Endothelial cell of umbilical vein (primary cell): ENCODE measurements at regions of chr13 and their contacts with region 1.

Region 1: GRCh38 chr13:96025283-96025682 is 27.9 kb downstream of the UGGT2 start:
- DNase-seq: peak; percentile 79
- H3K4me3 ChIP-seq: no peak overlapping the region
- H3K27ac ChIP-seq: peak overlapping the region; percentile 38
- H3K4me1 ChIP-seq: peaks cover 20% of the 10 kb centered on the region
- H3K27me3 ChIP-seq: no peaks in the 10 kb centered on the region
- CTCF ChIP-seq: no peak
- POLR2A ChIP-seq: no peak

Region 2: GRCh38 chr13:95948656-95949055 is 76.6 kb before region 1 on chr13:
- CTCF ChIA-PET with region 1: no interaction called
- POLR2A ChIA-PET with region 1: no interaction called
- dilution Hi-C with region 1: no loop called
- intact Hi-C with region 1: no loop called
- DNase-seq: no peak
- H3K4me3 ChIP-seq: no peak overlapping the region
- H3K27ac ChIP-seq: no peak overlapping the region
- H3K4me1 ChIP-seq: no peaks in the 10 kb centered on the region
- H3K27me3 ChIP-seq: no peaks in the 10 kb centered on the region
- CTCF ChIP-seq: no peak
- POLR2A ChIP-seq: no peak

Region 3: DNA sequence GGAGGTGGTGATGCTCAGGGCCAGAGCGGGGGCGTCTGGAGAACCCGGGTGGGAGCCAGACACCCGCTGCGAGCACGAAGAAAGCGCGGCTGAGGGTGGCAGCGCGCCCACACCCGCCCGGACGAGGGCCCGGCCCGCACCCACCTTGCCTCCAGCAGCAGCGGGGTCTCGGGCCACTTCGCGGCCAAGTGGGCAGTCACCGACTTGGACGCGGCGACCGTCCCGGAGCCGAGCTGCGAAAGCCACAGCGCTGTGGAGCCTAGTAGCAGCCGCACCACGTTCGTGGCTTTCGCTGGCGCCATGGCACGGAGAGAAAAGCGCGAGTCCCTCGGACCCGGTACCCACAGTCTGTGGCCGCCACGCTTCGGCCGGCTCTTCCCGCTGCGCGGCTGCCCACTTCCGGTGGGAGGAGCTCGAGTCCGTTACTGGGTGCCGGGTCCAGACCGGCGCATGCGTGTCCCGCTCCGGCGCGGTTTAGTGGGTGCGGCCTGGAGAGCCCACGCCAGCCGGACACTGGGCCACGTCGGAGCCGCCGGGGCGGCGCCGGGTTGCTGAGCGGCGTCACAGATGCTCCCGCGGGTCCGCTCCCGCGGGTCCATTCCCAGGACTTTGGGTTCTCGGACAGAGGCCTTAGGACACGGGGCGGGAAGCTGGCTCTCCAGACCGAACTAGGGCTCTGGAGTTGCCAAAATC is 27.9 kb after region 1 on chr13 and contains the start of gene UGGT2:
- CTCF ChIA-PET with region 1: interaction called, 23 read pairs
- POLR2A ChIA-PET with region 1: no interaction called
- dilution Hi-C with region 1: no loop called
- intact Hi-C with region 1: loop called (anchors 1 kb)
- DNase-seq: peak; percentile 94
- H3K4me3 ChIP-seq: peak within 1 kb of the TSS; percentile 92 to 96 (median 94)
- H3K27ac ChIP-seq: peak within 1 kb of the TSS; percentile 95
- H3K4me1 ChIP-seq: peaks cover 3% of the 10 kb centered on the region
- H3K27me3 ChIP-seq: peaks cover 0 to 6% of the 10 kb centered on the region in 2 experiments
- CTCF ChIP-seq: no peak
- POLR2A ChIP-seq: peak; percentile 80
- total RNA-seq, gene UGGT2: 25.1 and 25.7 TPM in 2 replicates

Region 4: GRCh38 chr13:96089749-96090239 is 64.5 kb after region 1 on chr13 and contains the start of gene HS6ST3:
- CTCF ChIA-PET with region 1: interaction called, 10 read pairs
- POLR2A ChIA-PET with region 1: no interaction called
- dilution Hi-C with region 1: no loop called
- intact Hi-C with region 1: loop called (anchors 5 kb)
- DNase-seq: peak; percentile 15
- H3K4me3 ChIP-seq: peak within 1 kb of the TSS; percentile 21 to 42 (median 38)
- H3K27ac ChIP-seq: no peak within 1 kb of the TSS
- H3K4me1 ChIP-seq: peaks cover 27% of the 10 kb centered on the region
- H3K27me3 ChIP-seq: peaks cover 38 to 39% of the 10 kb centered on the region in 2 experiments
- CTCF ChIP-seq: no peak
- POLR2A ChIP-seq: no peak
- total RNA-seq, gene HS6ST3: 0.15 and 0.35 TPM in 2 replicates

Region 5: DNA sequence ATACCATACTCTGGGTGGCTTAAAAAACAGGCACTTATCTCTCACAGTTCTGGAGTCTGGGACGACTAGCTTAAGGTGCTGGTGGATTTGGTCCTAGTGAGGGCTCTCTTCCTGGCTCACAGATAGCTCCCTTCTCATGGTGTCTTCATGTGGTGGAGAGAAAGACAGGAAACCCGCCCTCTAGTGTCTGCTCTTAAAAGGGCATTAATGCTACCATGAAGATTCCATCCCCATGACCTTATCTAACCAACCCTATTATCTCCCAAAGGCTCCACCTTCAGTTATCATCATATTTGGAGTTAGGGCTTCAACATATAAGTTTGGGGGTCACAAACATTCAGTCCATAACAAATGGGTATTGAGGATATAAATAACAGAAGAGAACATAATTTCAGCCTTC is 204.1 kb after region 1 on chr13:
- CTCF ChIA-PET with region 1: interaction called, 251 read pairs
- POLR2A ChIA-PET with region 1: no interaction called
- dilution Hi-C with region 1: no loop called
- intact Hi-C with region 1: loop called (anchors 1 kb)
- DNase-seq: peak; percentile 38
- H3K4me3 ChIP-seq: no peak overlapping the region
- H3K27ac ChIP-seq: no peak overlapping the region
- H3K4me1 ChIP-seq: no peaks in the 10 kb centered on the region
- H3K27me3 ChIP-seq: no peaks in the 10 kb centered on the region
- CTCF ChIP-seq: peak; percentile 46 to 66
- POLR2A ChIP-seq: no peak

Region 6: GRCh38 chr13:96710166-96710862 is 685.0 kb after region 1 on chr13:
- CTCF ChIA-PET with region 1: no interaction called
- POLR2A ChIA-PET with region 1: no interaction called
- dilution Hi-C with region 1: no loop called
- intact Hi-C with region 1: no loop called
- DNase-seq: no peak
- H3K4me3 ChIP-seq: no peak overlapping the region
- H3K27ac ChIP-seq: no peak overlapping the region
- H3K4me1 ChIP-seq: no peaks in the 10 kb centered on the region
- H3K27me3 ChIP-seq: no peaks in the 10 kb centered on the region
- CTCF ChIP-seq: no peak
- POLR2A ChIP-seq: no peak